ENCODE measurements at regions of chr1 and their contacts with region 1.

Region 1: DNA sequence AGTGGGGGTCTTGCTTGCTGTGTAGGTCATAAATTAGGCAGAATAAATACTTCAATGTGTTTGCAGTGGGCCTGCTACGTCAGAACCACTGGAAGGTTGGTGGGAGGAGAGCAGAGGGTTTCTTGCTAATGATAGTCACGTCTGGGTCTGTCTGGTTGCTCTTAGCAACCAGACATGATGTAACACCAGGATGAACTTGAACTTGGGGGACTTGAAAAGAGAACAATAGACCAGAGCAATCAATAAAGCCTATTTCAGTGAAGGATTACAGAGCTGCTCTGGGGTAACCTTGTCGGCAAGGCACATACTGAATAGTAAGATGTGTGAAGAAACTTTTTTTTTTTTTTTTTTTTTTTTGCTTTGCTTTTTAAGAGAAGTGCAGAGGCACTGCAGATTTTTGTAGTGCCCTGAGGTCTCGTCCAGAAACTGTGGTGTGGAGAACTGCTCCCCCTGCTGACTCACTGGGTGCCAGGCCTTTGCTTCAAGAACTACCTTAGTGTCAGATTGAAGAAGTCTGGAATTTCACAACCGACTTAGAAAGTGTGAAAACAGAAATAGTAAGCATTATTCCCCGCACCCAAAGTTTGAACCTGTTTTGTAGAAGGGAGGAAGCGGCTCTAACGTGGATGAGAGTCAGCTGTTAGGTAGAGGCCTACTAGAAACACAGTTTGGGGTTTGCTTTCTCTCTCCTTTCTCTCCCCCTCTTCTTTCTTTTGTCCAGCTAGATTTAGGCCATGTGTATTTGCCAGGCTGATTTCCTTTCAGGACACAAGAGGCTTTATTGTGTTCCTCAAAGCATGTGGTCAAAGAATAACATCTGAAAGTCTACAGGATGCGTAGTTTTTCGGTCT is 271.6 kb downstream of the TM2D1 start:
- DNase-seq: peak; percentile 35
- H3K4me3 Mint-ChIP-seq: no peak overlapping the region
- H3K27ac Mint-ChIP-seq: no peak overlapping the region
- H3K4me1 Mint-ChIP-seq: no peaks in the 10 kb centered on the region
- H3K27me3 Mint-ChIP-seq: peaks cover 6% of the 10 kb centered on the region

Region 2: GRCh38 chr1:59971464-59971911 is 1481.8 kb before region 1 on chr1:
- intact Hi-C with region 1: loop called (anchors 5 kb)
- DNase-seq: peak; percentile 19
- H3K4me3 Mint-ChIP-seq: no peak overlapping the region
- H3K27ac Mint-ChIP-seq: no peak overlapping the region
- H3K4me1 Mint-ChIP-seq: no peaks in the 10 kb centered on the region
- H3K27me3 Mint-ChIP-seq: peaks cover 27% of the 10 kb centered on the region

Region 3: DNA sequence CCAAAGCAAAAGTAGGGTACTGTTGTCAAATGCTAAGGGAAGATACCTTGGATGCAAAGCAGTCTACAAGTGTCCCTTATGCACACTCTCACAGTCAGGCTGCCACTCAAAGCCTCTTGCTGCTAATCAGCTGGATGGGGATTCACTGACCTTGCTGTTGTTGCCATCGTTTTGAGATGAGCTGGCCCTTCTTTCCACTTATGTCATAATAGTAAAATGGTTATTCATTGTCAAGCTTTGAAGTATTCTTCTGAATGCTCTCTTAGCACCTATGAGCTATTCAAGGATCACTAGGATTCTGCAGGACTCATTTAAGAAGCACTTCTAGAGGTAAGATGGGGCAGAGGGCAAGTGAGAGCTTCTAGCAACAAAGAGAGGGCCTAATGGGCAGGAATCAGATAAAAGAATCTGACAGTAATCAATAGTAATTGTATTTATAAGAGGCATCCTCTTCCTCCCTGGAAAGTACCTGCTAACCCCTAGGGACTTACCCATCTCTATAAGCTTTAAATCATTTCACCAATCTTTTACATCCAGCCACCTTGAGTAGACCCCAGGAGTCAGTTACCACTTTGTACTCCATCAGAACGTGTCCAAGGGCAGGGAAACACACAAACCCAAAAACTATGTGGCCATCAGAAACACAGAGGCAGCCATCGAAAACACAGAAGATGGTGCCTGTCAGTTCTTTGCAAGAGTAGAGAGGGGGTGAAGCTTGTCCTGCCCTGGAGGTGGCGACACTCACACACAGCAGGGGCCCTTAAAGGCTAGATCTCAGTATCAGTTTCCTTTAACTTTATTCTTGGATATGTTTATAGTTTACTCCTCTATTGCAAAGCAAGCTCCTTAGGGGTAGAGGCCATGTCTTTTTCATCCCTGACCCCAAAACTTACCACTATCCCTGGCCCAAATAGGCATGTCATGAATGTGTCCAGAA is 474.6 kb before region 1 on chr1:
- intact Hi-C with region 1: loop called (anchors 2 kb)
- DNase-seq: no peak
- H3K4me3 Mint-ChIP-seq: no peak overlapping the region
- H3K27ac Mint-ChIP-seq: no peak overlapping the region
- H3K4me1 Mint-ChIP-seq: no peaks in the 10 kb centered on the region
- H3K27me3 Mint-ChIP-seq: peaks cover 9% of the 10 kb centered on the region

Region 4: DNA sequence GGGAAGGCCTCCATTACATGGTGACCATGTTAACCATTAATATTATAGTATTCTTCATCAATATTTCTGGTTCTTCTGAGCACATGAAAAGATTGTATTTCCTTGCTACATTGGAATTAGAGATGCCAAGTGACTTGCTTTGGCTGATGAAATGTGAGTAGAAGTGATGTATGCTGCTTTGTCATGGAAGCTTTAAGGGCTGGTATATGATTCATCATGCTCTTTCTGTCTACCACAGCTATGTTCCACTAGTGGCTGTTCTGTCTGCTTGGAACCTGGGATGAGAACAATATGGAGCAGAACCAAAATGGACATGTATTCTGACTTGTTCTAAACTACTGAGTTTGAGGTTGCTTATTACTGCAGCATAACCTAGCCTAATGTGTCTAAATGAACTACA is 108.3 kb after region 1 on chr1:
- intact Hi-C with region 1: no loop called
- DNase-seq: no peak
- H3K4me3 Mint-ChIP-seq: no peak overlapping the region
- H3K27ac Mint-ChIP-seq: no peak overlapping the region
- H3K4me1 Mint-ChIP-seq: no peaks in the 10 kb centered on the region
- H3K27me3 Mint-ChIP-seq: no peaks in the 10 kb centered on the region